Heart right ventricle (tissue), 16 donors: ENCODE measurements at regions of chr15 and their contacts with region 1.

Region 1: GRCh38 chr15:57510647-57511046 is 81.1 kb upstream of the MYZAP start:
- DNase-seq: peak; percentile 48 to 76
- ATAC-seq: peak; percentile 63 to 89 (median 76)
- H3K4me3 ChIP-seq: no peak overlapping the region
- H3K27ac ChIP-seq: peak overlapping the region in 6 of 10 donors; percentile 50 to 74 (median 60)
- H3K4me1 ChIP-seq: peaks cover 2 to 55% (median 31%) of the 10 kb centered on the region in 9 donors
- H3K27me3 ChIP-seq: no peaks in the 10 kb centered on the region
- CTCF ChIP-seq: no peak

Region 2: GRCh38 chr15:57375827-57376695 is 134.6 kb before region 1 on chr15 and contains the start of gene CGNL1:
- intact Hi-C with region 1: loop called in 1 of 10 experiments (anchors 10 kb)
- DNase-seq: peak; percentile 24 to 65
- ATAC-seq: peak; percentile 71 to 93 (median 82)
- H3K4me3 ChIP-seq: peak within 1 kb of the TSS; percentile 49 to 80 (median 66)
- H3K27ac ChIP-seq: peak within 1 kb of the TSS in 9 of 10 donors; percentile 15 to 69 (median 40)
- H3K4me1 ChIP-seq: peaks cover 0 to 17% (median 11%) of the 10 kb centered on the region in 9 donors
- H3K27me3 ChIP-seq: peaks cover 0 to 50% (median 18%) of the 10 kb centered on the region in 7 donors
- CTCF ChIP-seq: peak in 1 of 9 donors; percentile 5
- total RNA-seq, gene CGNL1: 8.0 to 42.9 (median 35.5) TPM

Region 3: DNA sequence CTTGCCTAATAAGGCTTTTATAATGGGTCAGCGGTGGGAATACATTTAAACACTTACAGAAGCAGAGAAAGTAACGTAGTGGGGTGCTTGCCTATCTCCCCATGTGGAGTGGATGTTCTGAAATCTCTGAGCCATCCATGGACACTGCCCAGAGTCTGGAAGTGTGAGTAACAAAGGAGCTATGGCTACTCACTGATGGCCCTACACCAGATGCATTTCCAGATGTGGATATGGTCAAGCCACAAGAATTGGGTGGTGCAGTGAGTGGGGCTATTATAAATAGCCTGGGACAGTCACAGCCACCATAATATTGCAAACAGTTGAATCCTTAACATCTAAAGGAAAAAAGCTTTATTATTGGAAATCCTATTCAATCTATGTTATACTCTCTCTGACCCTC is 37.8 kb before region 1 on chr15:
- intact Hi-C with region 1: no loop called
- DNase-seq: no peak
- ATAC-seq: no peak
- H3K4me3 ChIP-seq: no peak overlapping the region
- H3K27ac ChIP-seq: no peak overlapping the region
- H3K4me1 ChIP-seq: peaks cover 0 to 34% (median 2%) of the 10 kb centered on the region in 9 donors
- H3K27me3 ChIP-seq: no peaks in the 10 kb centered on the region
- CTCF ChIP-seq: no peak

Region 4: GRCh38 chr15:57792724-57793449 is 282.2 kb after region 1 on chr15:
- intact Hi-C with region 1: no loop called
- DNase-seq: no peak
- ATAC-seq: no peak
- H3K4me3 ChIP-seq: no peak overlapping the region
- H3K27ac ChIP-seq: no peak overlapping the region
- H3K4me1 ChIP-seq: peaks cover 6 to 39% (median 23%) of the 10 kb centered on the region in 9 donors
- H3K27me3 ChIP-seq: no peaks in the 10 kb centered on the region
- CTCF ChIP-seq: no peak